ENCODE measurements at regions of chr3 and their contacts with region 1.

Region 1: GRCh38 chr3:108221911-108222852 is at the start of gene IFT57:
- DNase-seq: peak; percentile 99
- ATAC-seq: peak; percentile 91
- H3K4me3 ChIP-seq: peak within 1 kb of the TSS; percentile 84 to 92 (median 85)
- H3K4me3 Mint-ChIP-seq: peak within 1 kb of the TSS; percentile 99
- H3K27ac ChIP-seq: peak within 1 kb of the TSS; percentile 93 to 96
- H3K27ac Mint-ChIP-seq: peak within 1 kb of the TSS; percentile 95
- H3K4me1 ChIP-seq: peaks cover 31 to 45% of the 10 kb centered on the region in 2 donors
- H3K4me1 Mint-ChIP-seq: peaks cover 59% of the 10 kb centered on the region
- H3K27me3 ChIP-seq: no peaks in the 10 kb centered on the region
- H3K27me3 Mint-ChIP-seq: no peaks in the 10 kb centered on the region
- CTCF ChIP-seq: no peak
- total RNA-seq, gene IFT57: 90.5 and 94.4 TPM in 2 replicates

Region 2: DNA sequence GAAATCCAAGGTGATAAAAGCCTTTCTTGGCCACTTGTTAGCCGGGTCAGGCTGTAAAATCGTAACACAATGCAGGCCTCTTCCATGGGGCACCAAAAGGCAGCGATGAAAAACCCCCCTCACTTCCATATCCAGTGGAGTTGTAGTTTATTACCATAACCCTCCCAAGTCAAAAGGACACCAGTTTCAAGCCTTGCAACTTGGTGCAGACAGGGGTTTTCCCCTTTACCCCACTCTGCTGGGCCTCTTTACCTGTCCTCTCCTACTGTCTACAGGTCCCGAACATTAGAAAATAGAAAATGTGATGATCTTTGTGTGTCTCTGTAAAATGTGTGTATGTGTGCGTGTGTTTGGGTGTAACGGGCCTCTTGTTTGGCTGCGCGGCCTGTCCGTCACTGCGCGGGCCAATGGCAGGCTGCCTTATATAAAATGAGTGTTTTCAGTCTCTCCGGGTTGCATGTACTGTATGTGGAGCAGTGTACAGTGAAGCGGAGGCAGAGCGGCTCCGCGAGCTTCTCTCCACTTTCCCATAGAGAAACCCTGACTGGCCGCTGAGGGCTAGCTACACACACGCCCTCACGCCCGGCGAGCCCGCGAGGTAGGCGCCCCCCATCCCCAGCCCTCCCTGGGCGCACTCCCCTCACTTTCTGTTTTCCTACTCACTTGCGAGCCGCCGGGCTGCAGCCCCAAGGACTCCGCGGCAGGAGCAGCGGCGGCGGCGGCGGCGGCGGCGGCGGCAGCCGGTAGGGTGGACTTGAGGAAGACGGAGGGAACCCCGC is 699.5 kb before region 1 on chr3 and contains the start of gene BBX:
- CTCF ChIA-PET with region 1: no interaction called
- POLR2A ChIA-PET with region 1: no interaction called
- intact Hi-C with region 1: loop called (anchors 10 kb)
- DNase-seq: peak; percentile 97
- ATAC-seq: peak; percentile 84
- H3K4me3 ChIP-seq: peak within 1 kb of the TSS; percentile 74 to 96 (median 92)
- H3K4me3 Mint-ChIP-seq: peak within 1 kb of the TSS; percentile 98
- H3K27ac ChIP-seq: peak within 1 kb of the TSS; percentile 81 to 92
- H3K27ac Mint-ChIP-seq: peak within 1 kb of the TSS; percentile 99
- H3K4me1 ChIP-seq: peaks cover 24 to 27% of the 10 kb centered on the region in 2 donors
- H3K4me1 Mint-ChIP-seq: peaks cover 34% of the 10 kb centered on the region
- H3K27me3 ChIP-seq: no peaks in the 10 kb centered on the region
- H3K27me3 Mint-ChIP-seq: no peaks in the 10 kb centered on the region
- CTCF ChIP-seq: no peak
- total RNA-seq, gene BBX: 131 and 133 TPM in 2 replicates

Region 3: GRCh38 chr3:108090701-108091451 is 131.3 kb before region 1 on chr3 and contains the start of gene CD47:
- CTCF ChIA-PET with region 1: interaction called, 3 read pairs
- POLR2A ChIA-PET with region 1: interaction called, 8 read pairs
- intact Hi-C with region 1: loop called (anchors 1 kb)
- DNase-seq: peak; percentile 96
- ATAC-seq: peak; percentile 76
- H3K4me3 ChIP-seq: peak within 1 kb of the TSS; percentile 76 to 98 (median 96)
- H3K4me3 Mint-ChIP-seq: peak within 1 kb of the TSS; percentile 99
- H3K27ac ChIP-seq: peak within 1 kb of the TSS; percentile 89 to 97
- H3K27ac Mint-ChIP-seq: peak within 1 kb of the TSS; percentile 99
- H3K4me1 ChIP-seq: peaks cover 35 to 40% of the 10 kb centered on the region in 2 donors
- H3K4me1 Mint-ChIP-seq: peaks cover 25% of the 10 kb centered on the region
- H3K27me3 ChIP-seq: no peaks in the 10 kb centered on the region
- H3K27me3 Mint-ChIP-seq: no peaks in the 10 kb centered on the region
- CTCF ChIP-seq: no peak
- total RNA-seq, gene CD47: 259 and 260 TPM in 2 replicates

Region 4: DNA sequence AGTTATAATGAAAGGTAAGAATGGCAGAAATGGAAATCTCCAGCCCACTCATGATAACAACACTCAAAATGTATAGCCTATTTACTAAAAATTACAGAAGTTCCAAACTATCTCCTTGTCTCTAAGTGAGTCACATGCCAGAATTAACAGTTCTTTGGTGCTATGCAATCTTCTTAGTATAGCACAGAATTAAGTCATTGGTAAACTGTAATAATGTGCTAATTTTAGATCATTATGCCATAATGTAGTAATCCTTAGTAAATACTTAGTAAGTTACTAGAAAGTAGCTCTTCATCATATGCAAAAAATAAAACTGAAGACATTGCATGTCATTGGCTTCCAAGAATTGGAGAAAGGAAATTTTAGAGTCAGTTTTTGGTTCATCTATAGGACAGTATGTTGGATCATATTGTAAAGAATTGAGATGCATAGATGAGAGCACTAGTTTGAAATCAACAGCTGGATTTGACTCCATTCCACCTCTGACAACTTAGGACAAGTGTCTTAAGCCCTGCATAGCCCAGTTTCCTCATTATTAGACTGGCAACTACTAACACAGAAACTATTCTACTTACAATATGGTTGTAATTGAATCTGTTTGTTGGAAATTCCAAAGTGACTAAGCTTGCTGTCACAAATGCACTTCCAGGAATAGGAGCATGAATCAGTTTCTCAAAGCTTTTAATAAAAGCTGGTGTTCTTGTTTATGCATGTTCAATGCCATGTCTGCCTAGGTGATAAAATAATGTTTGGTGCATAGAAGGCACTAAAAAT is 91.3 kb before region 1 on chr3:
- CTCF ChIA-PET with region 1: interaction called, 13 read pairs
- POLR2A ChIA-PET with region 1: interaction called, 19 read pairs
- intact Hi-C with region 1: loop called (anchors 1 kb)
- DNase-seq: peak; percentile 39
- ATAC-seq: no peak
- H3K4me3 ChIP-seq: peak overlapping the region in 1 of 5 experiments; percentile 49
- H3K4me3 Mint-ChIP-seq: peak overlapping the region; percentile 62
- H3K27ac ChIP-seq: peak overlapping the region; percentile 91 to 99
- H3K27ac Mint-ChIP-seq: peak overlapping the region; percentile 85
- H3K4me1 ChIP-seq: peaks cover 97% of the 10 kb centered on the region in 2 donors
- H3K4me1 Mint-ChIP-seq: peaks cover 91% of the 10 kb centered on the region
- H3K27me3 ChIP-seq: no peaks in the 10 kb centered on the region
- H3K27me3 Mint-ChIP-seq: no peaks in the 10 kb centered on the region
- CTCF ChIP-seq: no peak

Region 5: DNA sequence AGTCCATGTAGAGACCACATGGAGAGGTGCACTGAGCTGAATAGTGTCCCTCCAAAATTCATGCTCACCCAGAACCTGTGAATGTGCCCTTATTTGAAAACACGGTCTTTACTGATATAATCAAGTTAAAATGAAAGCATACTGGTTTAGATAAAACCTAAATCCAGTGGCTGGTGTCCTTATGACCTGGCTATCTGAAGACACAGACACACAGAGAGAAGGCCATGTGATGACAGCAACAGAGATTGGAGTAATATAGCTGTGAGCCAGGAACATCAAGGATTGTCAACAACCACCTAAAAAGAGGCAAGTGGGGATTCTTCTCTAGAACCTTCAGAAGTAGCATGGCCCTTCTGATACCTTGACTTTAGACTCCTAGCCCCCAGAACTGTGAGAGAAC is 76.6 kb before region 1 on chr3:
- CTCF ChIA-PET with region 1: no interaction called
- POLR2A ChIA-PET with region 1: no interaction called
- intact Hi-C with region 1: no loop called
- DNase-seq: no peak
- ATAC-seq: no peak
- H3K4me3 ChIP-seq: no peak overlapping the region
- H3K4me3 Mint-ChIP-seq: no peak overlapping the region
- H3K27ac ChIP-seq: no peak overlapping the region
- H3K27ac Mint-ChIP-seq: no peak overlapping the region
- H3K4me1 ChIP-seq: no peaks in the 10 kb centered on the region
- H3K4me1 Mint-ChIP-seq: peaks cover 19% of the 10 kb centered on the region
- H3K27me3 ChIP-seq: no peaks in the 10 kb centered on the region
- H3K27me3 Mint-ChIP-seq: no peaks in the 10 kb centered on the region
- CTCF ChIP-seq: no peak

Region 6: DNA sequence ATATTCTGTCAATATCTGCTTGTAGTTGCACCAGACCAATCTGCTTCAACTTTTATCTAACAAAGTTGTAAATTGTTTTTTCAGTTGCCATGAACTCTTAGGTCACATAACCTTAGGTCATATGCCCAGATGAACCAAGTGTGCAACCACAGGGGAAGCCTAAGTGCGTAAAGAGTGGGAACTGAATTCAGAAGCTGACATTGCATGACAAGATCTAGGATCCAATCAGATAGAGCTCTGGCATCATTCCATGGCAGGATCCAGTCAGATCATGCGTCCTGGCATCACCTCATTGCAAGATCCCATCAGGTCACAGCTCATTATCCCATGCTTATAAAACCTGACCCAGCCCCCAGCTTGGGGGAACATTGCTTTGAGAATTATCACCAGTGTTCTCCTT is 19.0 kb after region 1 on chr3:
- CTCF ChIA-PET with region 1: no interaction called
- POLR2A ChIA-PET with region 1: no interaction called
- intact Hi-C with region 1: loop called (anchors 2 kb)
- DNase-seq: peak; percentile 46
- ATAC-seq: peak; percentile 57
- H3K4me3 ChIP-seq: no peak overlapping the region
- H3K4me3 Mint-ChIP-seq: no peak overlapping the region
- H3K27ac ChIP-seq: no peak overlapping the region
- H3K27ac Mint-ChIP-seq: no peak overlapping the region
- H3K4me1 ChIP-seq: peaks cover 0 to 8% of the 10 kb centered on the region in 2 donors
- H3K4me1 Mint-ChIP-seq: peaks cover 21% of the 10 kb centered on the region
- H3K27me3 ChIP-seq: no peaks in the 10 kb centered on the region
- H3K27me3 Mint-ChIP-seq: no peaks in the 10 kb centered on the region
- CTCF ChIP-seq: no peak

Region 7: GRCh38 chr3:108322352-108322751 is 100.2 kb after region 1 on chr3:
- CTCF ChIA-PET with region 1: interaction called, 18 read pairs
- POLR2A ChIA-PET with region 1: no interaction called
- intact Hi-C with region 1: loop called (anchors 5 kb)
- DNase-seq: peak; percentile 55
- ATAC-seq: peak; percentile 73
- H3K4me3 ChIP-seq: no peak overlapping the region
- H3K4me3 Mint-ChIP-seq: no peak overlapping the region
- H3K27ac ChIP-seq: no peak overlapping the region
- H3K27ac Mint-ChIP-seq: no peak overlapping the region
- H3K4me1 ChIP-seq: no peaks in the 10 kb centered on the region
- H3K4me1 Mint-ChIP-seq: peaks cover 12% of the 10 kb centered on the region
- H3K27me3 ChIP-seq: no peaks in the 10 kb centered on the region
- H3K27me3 Mint-ChIP-seq: no peaks in the 10 kb centered on the region
- CTCF ChIP-seq: peak; percentile 52

Region 8: DNA sequence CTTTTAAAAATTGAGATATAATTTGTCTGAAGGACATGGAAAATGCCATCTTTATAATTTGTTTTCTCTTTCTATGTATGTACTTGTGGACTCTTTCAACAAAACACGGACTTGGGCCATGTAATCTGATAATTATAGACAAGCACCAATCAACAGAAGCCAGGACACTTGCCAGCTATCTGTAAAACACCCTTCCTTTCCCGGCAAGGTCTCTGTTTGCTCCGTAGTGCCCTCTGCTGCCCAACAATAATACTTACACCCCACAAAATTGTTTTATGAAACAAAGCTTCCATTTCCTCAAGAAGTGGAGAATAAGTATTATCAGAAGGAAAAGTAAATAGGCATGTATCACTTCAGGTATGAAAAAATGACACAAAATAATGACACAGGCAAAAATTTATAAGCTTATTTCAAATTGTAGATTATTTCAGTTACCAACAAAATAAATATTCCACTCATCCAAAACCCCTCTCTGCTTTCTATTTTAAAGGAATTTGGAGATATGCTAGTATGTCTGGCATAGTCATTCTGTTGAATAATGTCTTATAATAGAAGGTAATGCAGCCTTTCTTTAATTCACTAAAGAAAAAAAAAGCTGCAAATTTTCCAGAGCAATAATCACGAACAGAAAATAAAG is 255.4 kb after region 1 on chr3:
- CTCF ChIA-PET with region 1: interaction called, 6 read pairs
- POLR2A ChIA-PET with region 1: no interaction called
- intact Hi-C with region 1: loop called (anchors 5 kb)
- DNase-seq: peak; percentile 72
- ATAC-seq: peak; percentile 77
- H3K4me3 ChIP-seq: no peak overlapping the region
- H3K4me3 Mint-ChIP-seq: no peak overlapping the region
- H3K27ac ChIP-seq: no peak overlapping the region
- H3K27ac Mint-ChIP-seq: no peak overlapping the region
- H3K4me1 ChIP-seq: peaks cover 4 to 6% of the 10 kb centered on the region in 2 donors
- H3K4me1 Mint-ChIP-seq: peaks cover 12% of the 10 kb centered on the region
- H3K27me3 ChIP-seq: no peaks in the 10 kb centered on the region
- H3K27me3 Mint-ChIP-seq: peaks cover 4% of the 10 kb centered on the region
- CTCF ChIP-seq: peak; percentile 89

Measured in B cell (primary cell).